Right cardiac atrium (tissue), 5 donors: ENCODE measurements at regions of chr15 and their contacts with region 1.

Region 1: DNA sequence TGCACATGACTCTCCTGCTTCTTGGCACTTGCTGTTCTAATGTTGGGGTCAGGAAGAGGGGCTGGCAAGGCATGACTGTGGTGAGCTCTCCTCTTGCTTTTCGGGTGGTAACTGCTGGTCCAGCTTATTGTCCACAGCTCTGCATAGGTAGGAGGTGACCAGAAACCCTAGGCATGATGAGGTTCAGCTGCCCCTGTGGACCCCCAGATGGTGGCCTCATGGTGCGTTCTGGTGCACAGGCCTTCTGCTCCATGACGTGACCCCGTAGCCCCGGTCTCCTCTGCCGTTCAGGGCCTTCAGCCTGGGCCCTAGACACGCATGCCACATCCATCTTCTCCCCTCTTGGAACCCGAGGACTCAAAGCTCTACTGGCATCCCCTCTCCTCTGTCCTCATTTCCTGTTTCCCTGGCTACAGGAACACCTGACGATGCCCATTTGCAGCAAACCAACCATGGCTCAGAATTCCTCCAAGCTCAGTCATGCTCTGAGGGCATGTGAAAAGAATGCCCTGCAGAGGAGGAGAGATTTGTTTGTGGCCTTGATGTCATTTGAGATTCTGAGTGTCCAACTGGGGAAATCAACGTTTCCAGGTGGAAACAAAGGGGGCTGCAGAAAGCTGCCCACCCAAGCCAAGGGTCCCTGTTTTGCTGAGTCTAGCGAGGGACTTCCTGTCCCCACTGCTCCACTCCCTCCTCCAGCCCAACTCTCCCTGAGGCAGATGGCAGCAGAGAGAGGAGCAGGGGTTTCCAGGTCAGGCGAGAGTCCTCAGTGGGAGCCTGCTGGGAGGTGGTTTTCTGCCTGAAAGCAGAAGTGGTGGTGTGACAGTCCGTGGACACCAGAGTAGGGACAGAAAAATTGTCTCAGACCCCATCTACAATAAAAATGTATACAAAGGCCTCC is 198.7 kb upstream of the LYSMD4 start:
- DNase-seq: no peak
- ATAC-seq: no peak
- H3K4me3 ChIP-seq: no peak overlapping the region
- H3K27ac ChIP-seq: no peak overlapping the region
- H3K4me1 ChIP-seq: peaks cover 2% of the 10 kb centered on the region
- H3K27me3 ChIP-seq: no peaks in the 10 kb centered on the region

Region 2: DNA sequence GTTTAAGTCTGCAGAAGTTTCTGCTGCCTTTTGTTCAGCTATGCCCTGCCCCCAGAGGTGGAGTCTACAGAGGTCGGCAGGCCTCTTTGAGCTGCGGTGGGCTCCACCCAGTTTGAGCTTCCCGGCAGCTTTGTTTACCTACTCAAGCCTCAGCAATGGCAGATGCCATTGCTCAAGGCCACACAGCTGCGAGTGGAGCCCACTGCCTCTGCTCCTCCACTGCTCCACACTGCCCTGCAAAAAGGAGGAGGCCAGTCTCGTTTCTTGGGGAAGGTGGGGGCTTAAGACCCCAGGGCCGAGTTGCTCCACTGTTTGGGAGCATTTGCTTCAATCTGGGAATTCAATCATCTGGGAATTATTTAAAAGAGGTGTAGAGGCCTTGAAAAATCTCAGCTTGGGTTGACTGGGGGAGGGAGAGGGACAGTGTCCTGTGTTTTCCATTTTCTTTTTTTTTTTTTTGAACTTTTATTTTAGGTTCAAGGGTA is 510.7 kb before region 1 on chr15:
- intact Hi-C with region 1: no loop called
- DNase-seq: no peak
- ATAC-seq: no peak
- H3K4me3 ChIP-seq: no peak overlapping the region
- H3K27ac ChIP-seq: no peak overlapping the region
- H3K4me1 ChIP-seq: peaks cover 10% of the 10 kb centered on the region
- H3K27me3 ChIP-seq: no peaks in the 10 kb centered on the region

Region 3: DNA sequence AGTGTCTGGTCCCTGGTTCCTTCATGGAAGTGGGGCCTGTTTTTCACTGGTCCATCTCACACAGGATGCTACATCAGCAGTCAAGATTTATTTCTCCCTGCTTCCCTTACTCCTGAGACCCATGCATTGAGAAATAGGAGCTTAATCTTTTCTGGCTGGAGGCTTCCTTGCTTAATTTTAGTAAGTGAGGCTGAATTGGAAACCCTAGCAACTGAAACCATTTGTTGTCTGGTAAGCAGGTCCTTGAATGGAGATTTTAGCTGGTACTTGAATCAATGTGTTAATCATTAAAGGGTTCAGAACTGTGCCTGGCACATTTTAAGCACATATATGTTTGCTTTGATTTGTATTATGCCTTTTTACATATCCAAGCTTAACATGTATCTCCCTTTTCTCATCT is 386.3 kb before region 1 on chr15:
- intact Hi-C with region 1: no loop called
- DNase-seq: no peak
- ATAC-seq: no peak
- H3K4me3 ChIP-seq: no peak overlapping the region
- H3K27ac ChIP-seq: no peak overlapping the region
- H3K4me1 ChIP-seq: peaks cover 2% of the 10 kb centered on the region
- H3K27me3 ChIP-seq: no peaks in the 10 kb centered on the region

Region 4: GRCh38 chr15:100131321-100132224 is 199.6 kb after region 1 on chr15:
- intact Hi-C with region 1: loop called in 1 of 4 experiments (anchors 10 kb)
- DNase-seq: peak; percentile 80 to 91 (median 89)
- ATAC-seq: peak; percentile 89 to 91
- H3K4me3 ChIP-seq: peak overlapping the region; percentile 14
- H3K27ac ChIP-seq: peak overlapping the region; percentile 2
- H3K4me1 ChIP-seq: no peaks in the 10 kb centered on the region
- H3K27me3 ChIP-seq: no peaks in the 10 kb centered on the region

Region 5: GRCh38 chr15:100338971-100339444 is 407.1 kb after region 1 on chr15:
- intact Hi-C with region 1: loop called in 2 of 4 experiments (anchors 5 to 10 kb)
- DNase-seq: peak; percentile 65 to 81 (median 65)
- ATAC-seq: peak; percentile 48 to 53
- H3K4me3 ChIP-seq: no peak overlapping the region
- H3K27ac ChIP-seq: no peak overlapping the region
- H3K4me1 ChIP-seq: no peaks in the 10 kb centered on the region
- H3K27me3 ChIP-seq: no peaks in the 10 kb centered on the region

Region 6: GRCh38 chr15:100349696-100350433 is 417.9 kb after region 1 on chr15:
- intact Hi-C with region 1: loop called in 1 of 4 experiments (anchors 10 kb)
- DNase-seq: peak; percentile 94 to 97 (median 97)
- ATAC-seq: peak; percentile 96 to 98
- H3K4me3 ChIP-seq: peak overlapping the region; percentile 68
- H3K27ac ChIP-seq: peak overlapping the region; percentile 97
- H3K4me1 ChIP-seq: peaks cover 2% of the 10 kb centered on the region
- H3K27me3 ChIP-seq: no peaks in the 10 kb centered on the region